PC-3 (cell line): ENCODE measurements at regions of chr12 and their contacts with region 1.

Region 1: DNA sequence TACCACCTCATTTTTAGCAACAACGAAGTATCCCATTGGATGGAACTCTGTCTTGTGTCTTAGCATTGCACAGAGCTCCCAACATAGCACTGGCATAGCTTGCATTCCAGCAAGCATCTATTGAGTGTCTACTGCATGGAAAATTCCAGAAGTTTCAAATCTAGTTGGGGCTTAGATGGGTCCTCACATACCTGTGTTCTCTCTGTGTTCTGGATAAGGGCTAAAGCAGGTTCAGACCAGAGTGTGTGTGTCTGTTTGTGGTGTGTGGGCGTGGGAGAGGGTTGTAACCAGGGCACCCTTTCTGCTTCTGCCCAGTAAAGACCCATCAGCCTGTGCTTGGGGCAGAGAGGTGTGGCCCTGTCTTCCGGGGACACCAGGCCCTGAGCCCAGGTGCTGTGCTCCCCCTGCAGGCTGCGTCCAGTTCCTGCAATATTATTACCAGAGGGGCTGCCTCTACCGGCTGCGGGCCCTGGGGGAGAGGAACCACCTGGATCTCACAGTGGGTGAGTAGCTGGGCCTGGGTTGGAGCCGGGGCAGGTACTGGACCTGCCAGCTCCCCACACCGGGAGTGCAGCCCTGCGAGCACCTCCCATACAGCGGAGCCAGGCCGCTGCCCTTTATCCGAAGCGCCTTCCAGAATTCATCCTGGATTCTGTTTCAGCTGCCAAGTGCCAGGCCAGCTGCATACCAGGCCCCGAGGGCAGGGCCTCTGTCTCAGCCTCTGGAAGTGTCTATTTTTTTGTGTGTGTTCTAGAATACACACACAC is 20.3 kb downstream of the RHOF start:
- DNase-seq: peak; percentile 84
- ATAC-seq: peak; percentile 68
- H3K4me3 ChIP-seq: no peak overlapping the region
- H3K27ac ChIP-seq: no peak overlapping the region
- H3K4me1 ChIP-seq: peaks cover 9% of the 10 kb centered on the region
- H3K27me3 ChIP-seq: no peaks in the 10 kb centered on the region
- CTCF ChIP-seq: peak; percentile 98

Region 2: DNA sequence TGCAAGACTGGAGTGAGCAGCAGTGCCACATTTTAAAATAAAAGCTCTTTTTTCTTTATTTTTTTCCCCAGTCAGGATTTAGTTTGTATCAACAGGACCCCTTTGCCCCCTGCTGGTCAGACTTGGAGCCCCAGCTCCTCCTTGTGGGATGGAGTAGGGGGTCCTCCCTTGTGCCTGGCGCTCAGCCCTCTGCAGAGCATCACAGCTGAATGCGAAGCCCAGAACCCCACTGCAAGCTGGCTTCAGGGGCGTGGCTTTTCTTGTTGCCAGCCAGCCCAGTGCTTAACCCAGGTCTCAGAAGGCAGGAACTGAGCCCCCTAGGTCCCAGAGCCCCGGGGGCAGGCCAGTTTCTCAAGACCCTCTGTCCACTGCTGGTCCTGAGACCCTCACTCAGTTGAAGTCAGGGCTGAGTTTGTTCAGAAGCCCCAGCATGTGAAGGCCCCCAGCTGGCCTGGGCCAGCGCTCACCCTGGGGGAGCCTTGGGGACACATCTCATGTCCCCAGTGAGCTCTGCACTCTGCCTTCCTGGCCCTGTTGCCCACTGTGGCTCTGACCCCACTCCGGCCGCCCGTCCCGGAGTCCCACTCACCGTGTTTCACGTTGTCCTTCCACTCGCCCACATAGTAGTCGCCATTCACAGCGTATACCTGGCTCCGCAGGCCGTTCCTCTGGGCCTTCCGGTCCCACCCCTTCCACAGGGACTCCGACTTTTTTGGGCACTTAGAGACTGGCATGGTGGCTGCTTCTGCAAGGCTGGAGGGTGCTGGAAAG is 104.3 kb before region 1 on chr12:
- CTCF ChIA-PET with region 1: no interaction called
- POLR2A ChIA-PET with region 1: no interaction called
- intact Hi-C with region 1: no loop called
- DNase-seq: peak; percentile 61
- ATAC-seq: no peak
- H3K4me3 ChIP-seq: no peak overlapping the region
- H3K27ac ChIP-seq: no peak overlapping the region
- H3K4me1 ChIP-seq: peaks cover 10% of the 10 kb centered on the region
- H3K27me3 ChIP-seq: no peaks in the 10 kb centered on the region
- CTCF ChIP-seq: peak; percentile 88

Region 3: GRCh38 chr12:121697098-121697698 is 76.0 kb before region 1 on chr12:
- CTCF ChIA-PET with region 1: interaction called, 3 read pairs
- POLR2A ChIA-PET with region 1: no interaction called
- intact Hi-C with region 1: loop called (anchors 1 kb)
- DNase-seq: peak; percentile 88
- ATAC-seq: peak; percentile 53
- H3K4me3 ChIP-seq: no peak overlapping the region
- H3K27ac ChIP-seq: no peak overlapping the region
- H3K4me1 ChIP-seq: no peaks in the 10 kb centered on the region
- H3K27me3 ChIP-seq: no peaks in the 10 kb centered on the region
- CTCF ChIP-seq: peak; percentile 79

Region 4: GRCh38 chr12:121811434-121812319 is 38.5 kb after region 1 on chr12:
- CTCF ChIA-PET with region 1: interaction called, 6 read pairs
- POLR2A ChIA-PET with region 1: interaction called, 4 read pairs
- intact Hi-C with region 1: loop called (anchors 1 kb)
- DNase-seq: peak; percentile 84
- ATAC-seq: peak; percentile 79
- H3K4me3 ChIP-seq: peak overlapping the region; percentile 70
- H3K27ac ChIP-seq: peak overlapping the region; percentile 19
- H3K4me1 ChIP-seq: peaks cover 34% of the 10 kb centered on the region
- H3K27me3 ChIP-seq: no peaks in the 10 kb centered on the region
- CTCF ChIP-seq: peak; percentile 97